ENCODE measurements at regions of chr5 and their contacts with region 1.

Region 1: GRCh38 chr5:180860887-180861822 is at the start of gene ZFP62:
- DNase-seq: peak; percentile 86 to 93
- ATAC-seq: peak; percentile 86 to 95 (median 89)
- H3K4me3 ChIP-seq: peak within 1 kb of the TSS; percentile 99
- H3K4me3 Mint-ChIP-seq: peak within 1 kb of the TSS; percentile 92
- H3K27ac ChIP-seq: peak within 1 kb of the TSS; percentile 93
- H3K27ac Mint-ChIP-seq: peak within 1 kb of the TSS; percentile 89 to 90
- H3K4me1 ChIP-seq: peaks cover 9% of the 10 kb centered on the region
- H3K4me1 Mint-ChIP-seq: peaks cover 24 to 27% of the 10 kb centered on the region in 2 donors
- H3K27me3 ChIP-seq: no peaks in the 10 kb centered on the region
- H3K27me3 Mint-ChIP-seq: peaks cover 3 to 4% of the 10 kb centered on the region in 2 donors
- CTCF ChIP-seq: no peak
- total RNA-seq, gene ZFP62: 16.6 to 21.0 (median 20.3) TPM

Region 2: GRCh38 chr5:180784497-180785097 is 76.6 kb before region 1 on chr5:
- intact Hi-C with region 1: loop called (anchors 1 kb)
- DNase-seq: peak; percentile 56 to 85
- ATAC-seq: peak; percentile 80 to 91 (median 88)
- H3K4me3 ChIP-seq: no peak overlapping the region
- H3K4me3 Mint-ChIP-seq: no peak overlapping the region
- H3K27ac ChIP-seq: no peak overlapping the region
- H3K27ac Mint-ChIP-seq: peak overlapping the region; percentile 37 to 80
- H3K4me1 ChIP-seq: peaks cover 9% of the 10 kb centered on the region
- H3K4me1 Mint-ChIP-seq: peaks cover 12 to 35% of the 10 kb centered on the region in 2 donors
- H3K27me3 ChIP-seq: no peaks in the 10 kb centered on the region
- H3K27me3 Mint-ChIP-seq: no peaks in the 10 kb centered on the region
- CTCF ChIP-seq: peak; percentile 82

Region 3: DNA sequence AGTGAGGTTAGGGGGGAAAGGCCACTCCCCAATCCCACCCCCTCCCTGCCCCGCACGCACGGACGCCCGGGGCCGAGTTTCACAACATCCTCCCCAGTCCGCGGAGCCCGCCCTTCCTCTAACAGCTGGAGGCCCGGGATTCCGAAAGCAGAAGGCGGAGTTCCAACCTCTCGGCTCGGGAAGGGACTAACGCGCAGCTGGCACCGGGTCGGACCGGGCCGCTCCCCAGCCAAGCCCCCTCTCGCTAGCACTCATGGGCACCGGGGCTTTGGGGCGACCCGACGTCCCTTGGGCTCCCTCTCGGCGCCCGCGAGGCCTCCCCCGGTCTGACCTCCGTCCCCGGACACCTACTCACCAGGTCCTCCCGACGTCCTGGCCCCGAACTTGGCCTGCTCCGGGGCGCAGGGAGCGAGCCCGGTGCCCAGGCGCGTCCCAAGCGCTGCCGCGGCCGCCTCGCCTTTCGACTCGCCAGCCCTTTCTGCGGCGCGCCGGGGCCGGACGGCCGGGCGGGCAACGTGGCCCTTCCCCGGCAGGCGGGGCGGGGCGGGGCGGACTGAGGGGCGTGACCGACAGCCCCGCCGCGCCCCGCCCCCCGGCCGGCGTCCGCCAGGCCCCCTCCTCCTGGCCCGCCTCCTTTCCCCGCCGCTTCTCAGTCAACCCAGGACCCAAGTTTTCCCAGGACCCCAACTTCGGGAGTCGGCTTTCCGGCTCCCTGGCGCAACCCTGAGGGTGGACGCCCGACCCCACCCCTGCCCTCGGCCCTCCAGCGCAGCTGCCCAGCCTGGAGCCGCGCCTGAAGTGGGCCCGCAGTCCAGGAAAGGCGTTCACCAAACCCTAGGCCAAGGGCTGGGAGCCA is 58.6 kb before region 1 on chr5 and contains the start of gene MGAT1:
- intact Hi-C with region 1: loop called (anchors 2 kb)
- DNase-seq: peak; percentile 81 to 83
- ATAC-seq: peak; percentile 66 to 84 (median 72)
- H3K4me3 ChIP-seq: peak within 1 kb of the TSS; percentile 88
- H3K4me3 Mint-ChIP-seq: peak within 1 kb of the TSS; percentile 93
- H3K27ac ChIP-seq: peak within 1 kb of the TSS; percentile 78
- H3K27ac Mint-ChIP-seq: peak within 1 kb of the TSS; percentile 83 to 96
- H3K4me1 ChIP-seq: peaks cover 81% of the 10 kb centered on the region
- H3K4me1 Mint-ChIP-seq: peaks cover 82% of the 10 kb centered on the region in 2 donors
- H3K27me3 ChIP-seq: no peaks in the 10 kb centered on the region
- H3K27me3 Mint-ChIP-seq: no peaks in the 10 kb centered on the region
- CTCF ChIP-seq: no peak
- total RNA-seq, gene MGAT1: 105 to 149 (median 130) TPM

Region 4: DNA sequence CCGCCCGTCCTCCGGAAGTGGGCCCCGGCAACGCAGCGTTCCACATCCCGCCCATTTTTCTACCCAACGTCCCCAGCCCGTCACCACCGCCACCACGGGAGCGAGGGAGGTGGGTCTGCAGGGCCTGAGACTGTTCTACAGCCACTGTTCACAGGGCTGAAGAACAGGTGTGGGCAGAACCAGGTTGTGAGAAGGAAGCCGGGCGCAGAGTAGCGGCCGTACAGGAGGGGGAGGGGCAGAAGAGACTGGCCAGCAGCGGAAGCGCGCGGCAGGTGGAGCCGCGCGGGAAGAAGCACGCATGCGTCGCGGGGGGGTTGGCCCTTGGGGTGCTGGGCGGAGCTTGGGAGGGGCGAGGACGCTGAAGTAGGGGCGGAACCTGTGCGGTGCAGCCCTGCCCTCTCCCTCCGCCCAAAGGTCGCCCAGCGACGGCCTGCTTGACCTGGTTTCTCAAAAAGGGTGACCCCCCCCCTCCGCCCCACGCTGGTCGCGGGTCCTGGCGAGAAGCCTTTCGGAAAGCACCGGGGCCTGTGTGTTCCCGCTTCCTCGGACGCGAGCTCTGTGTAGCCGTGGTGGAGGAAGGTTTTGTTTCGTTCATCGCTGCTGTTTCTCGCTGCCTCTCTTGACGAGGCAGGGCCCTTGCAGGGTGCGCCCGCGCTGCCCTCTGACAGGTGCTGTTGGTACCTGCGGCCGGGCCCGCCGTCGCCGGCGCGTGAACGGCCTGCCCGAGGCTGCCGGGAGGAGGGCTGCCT is 50.8 kb before region 1 on chr5:
- intact Hi-C with region 1: loop called (anchors 1 kb)
- DNase-seq: peak; percentile 95 to 98
- ATAC-seq: peak; percentile 80 to 91 (median 81)
- H3K4me3 ChIP-seq: peak overlapping the region; percentile 76
- H3K4me3 Mint-ChIP-seq: peak overlapping the region; percentile 72
- H3K27ac ChIP-seq: peak overlapping the region; percentile 97
- H3K27ac Mint-ChIP-seq: peak overlapping the region; percentile 83 to 96
- H3K4me1 ChIP-seq: peaks cover 54% of the 10 kb centered on the region
- H3K4me1 Mint-ChIP-seq: peaks cover 54 to 58% of the 10 kb centered on the region in 2 donors
- H3K27me3 ChIP-seq: no peaks in the 10 kb centered on the region
- H3K27me3 Mint-ChIP-seq: peaks cover 0 to 4% of the 10 kb centered on the region in 2 donors
- CTCF ChIP-seq: no peak

Region 5: GRCh38 chr5:180831139-180832048 is 29.8 kb before region 1 on chr5:
- intact Hi-C with region 1: loop called (anchors 2 kb)
- DNase-seq: peak; percentile 78 to 82
- ATAC-seq: peak; percentile 80 to 87 (median 81)
- H3K4me3 ChIP-seq: peak overlapping the region; percentile 95
- H3K4me3 Mint-ChIP-seq: peak overlapping the region; percentile 95
- H3K27ac ChIP-seq: peak overlapping the region; percentile 98
- H3K27ac Mint-ChIP-seq: peak overlapping the region; percentile 90 to 99
- H3K4me1 ChIP-seq: peaks cover 35% of the 10 kb centered on the region
- H3K4me1 Mint-ChIP-seq: peaks cover 33 to 48% of the 10 kb centered on the region in 2 donors
- H3K27me3 ChIP-seq: no peaks in the 10 kb centered on the region
- H3K27me3 Mint-ChIP-seq: no peaks in the 10 kb centered on the region
- CTCF ChIP-seq: peak; percentile 3